ENCODE measurements at regions of chr16 and their contacts with region 1.

Region 1: GRCh38 chr16:71499775-71500364 is 10.7 kb upstream of the ZNF19 start:
- DNase-seq: peak; percentile 61
- ATAC-seq: peak; percentile 65
- H3K4me3 Mint-ChIP-seq: no peak overlapping the region
- H3K27ac Mint-ChIP-seq: no peak overlapping the region
- H3K4me1 Mint-ChIP-seq: no peaks in the 10 kb centered on the region
- H3K27me3 Mint-ChIP-seq: no peaks in the 10 kb centered on the region

Region 2: GRCh38 chr16:71230122-71230845 is 269.6 kb before region 1 on chr16 and contains the start of gene HYDIN:
- CTCF ChIA-PET with region 1: no interaction called
- DNase-seq: no peak
- ATAC-seq: no peak
- H3K4me3 Mint-ChIP-seq: no peak within 1 kb of the TSS
- H3K27ac Mint-ChIP-seq: no peak within 1 kb of the TSS
- H3K4me1 Mint-ChIP-seq: no peaks in the 10 kb centered on the region
- H3K27me3 Mint-ChIP-seq: peaks cover 22% of the 10 kb centered on the region
- total RNA-seq, gene HYDIN: not detected

Region 3: DNA sequence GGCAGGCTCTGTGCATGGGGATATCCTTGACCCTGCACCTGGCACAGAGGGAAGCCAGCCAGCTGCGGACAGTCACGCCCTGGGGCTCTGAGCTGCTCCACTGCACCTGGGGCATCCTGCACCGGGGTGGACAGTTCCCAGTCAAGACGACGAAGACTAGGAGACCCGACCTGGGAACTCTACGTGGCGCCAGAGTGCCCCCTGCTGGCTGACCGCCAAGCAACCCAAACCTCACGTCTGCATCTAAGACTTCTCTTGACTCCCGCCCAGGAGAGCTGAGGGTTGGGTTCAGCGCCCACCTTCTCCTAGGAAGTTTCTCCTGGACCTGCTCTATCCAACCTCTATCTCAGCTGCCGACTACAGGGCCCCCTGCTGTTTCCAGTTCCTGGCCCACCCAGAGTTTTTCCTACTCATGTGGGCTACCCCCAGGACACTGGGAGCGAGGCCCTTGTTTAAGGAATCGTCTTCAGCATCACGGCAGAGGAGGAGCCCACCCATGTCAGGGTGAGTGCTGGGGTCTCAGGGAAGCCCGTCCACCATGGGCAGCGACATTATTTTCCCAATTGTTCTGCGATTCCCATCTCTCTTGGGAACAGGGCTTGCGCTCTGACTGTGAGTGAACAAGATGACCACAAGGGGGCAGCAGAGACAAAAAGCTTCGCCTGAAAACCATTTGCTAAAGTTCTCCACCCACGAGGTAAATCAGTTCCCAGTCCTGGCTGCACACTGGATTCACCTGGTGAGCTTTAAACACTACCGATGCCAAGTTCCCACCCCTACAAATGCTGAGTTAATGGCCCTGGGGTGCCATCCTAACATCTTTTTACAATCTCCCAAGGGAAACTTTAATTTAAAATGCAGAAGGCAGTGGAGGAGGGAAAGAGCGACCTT is 87.4 kb before region 1 on chr16:
- CTCF ChIA-PET with region 1: interaction called, 80 read pairs
- DNase-seq: peak; percentile 66
- ATAC-seq: peak; percentile 77
- H3K4me3 Mint-ChIP-seq: no peak overlapping the region
- H3K27ac Mint-ChIP-seq: no peak overlapping the region
- H3K4me1 Mint-ChIP-seq: peaks cover 11% of the 10 kb centered on the region
- H3K27me3 Mint-ChIP-seq: peaks cover 45% of the 10 kb centered on the region

Region 4: DNA sequence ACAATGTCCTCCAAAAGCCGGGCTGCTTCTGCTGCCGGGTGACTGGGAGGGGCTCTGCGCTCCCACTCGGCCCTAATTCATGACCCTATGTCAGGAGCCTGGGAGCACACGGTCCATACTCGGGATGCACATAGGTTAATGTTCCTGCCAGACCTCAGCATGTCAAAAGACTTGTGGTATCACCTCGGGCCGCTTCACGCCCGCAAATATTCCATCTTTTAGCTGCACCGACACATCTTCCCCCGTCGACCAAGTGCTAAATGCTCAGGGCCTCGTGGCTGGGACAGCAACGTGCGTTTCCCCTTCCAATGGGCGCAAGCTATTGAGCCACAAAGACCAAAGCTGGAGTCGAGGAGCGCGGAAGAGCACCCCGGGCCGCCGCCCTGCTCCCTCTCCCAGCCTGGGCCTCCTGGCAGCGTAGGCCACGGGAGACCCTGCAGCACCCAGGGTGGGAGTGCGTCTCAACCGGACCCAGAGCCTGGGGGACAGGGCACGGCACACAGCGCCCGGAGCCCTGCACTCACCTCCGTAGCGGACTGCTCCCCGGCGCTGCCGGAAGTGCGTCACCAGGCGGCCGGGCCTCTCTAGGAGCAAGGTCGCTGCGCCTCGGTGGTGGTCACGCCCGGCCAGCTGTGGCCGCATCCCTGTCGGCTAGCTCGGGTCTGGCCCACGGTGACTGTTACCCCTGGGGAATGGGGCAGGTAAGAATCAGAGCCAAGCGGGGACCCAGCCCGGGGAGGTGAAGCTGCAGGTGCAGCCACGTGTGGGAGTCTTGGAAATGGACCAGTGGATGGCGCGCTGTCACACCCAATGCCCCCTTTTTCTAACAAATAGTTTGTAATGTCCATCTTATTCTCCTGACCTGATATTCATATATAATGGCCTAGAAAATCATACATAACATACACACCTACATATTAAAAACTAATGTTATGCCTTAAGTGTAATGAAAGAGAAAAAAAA is 37.9 kb before region 1 on chr16 and contains the start of gene ZNF23:
- CTCF ChIA-PET with region 1: interaction called, 14 read pairs
- DNase-seq: peak; percentile 82
- ATAC-seq: peak; percentile 99
- H3K4me3 Mint-ChIP-seq: peak within 1 kb of the TSS; percentile 89
- H3K27ac Mint-ChIP-seq: peak within 1 kb of the TSS; percentile 86
- H3K4me1 Mint-ChIP-seq: peaks cover 25% of the 10 kb centered on the region
- H3K27me3 Mint-ChIP-seq: no peaks in the 10 kb centered on the region
- total RNA-seq, gene ZNF23: 7.1 to 7.6 TPM

Region 5: DNA sequence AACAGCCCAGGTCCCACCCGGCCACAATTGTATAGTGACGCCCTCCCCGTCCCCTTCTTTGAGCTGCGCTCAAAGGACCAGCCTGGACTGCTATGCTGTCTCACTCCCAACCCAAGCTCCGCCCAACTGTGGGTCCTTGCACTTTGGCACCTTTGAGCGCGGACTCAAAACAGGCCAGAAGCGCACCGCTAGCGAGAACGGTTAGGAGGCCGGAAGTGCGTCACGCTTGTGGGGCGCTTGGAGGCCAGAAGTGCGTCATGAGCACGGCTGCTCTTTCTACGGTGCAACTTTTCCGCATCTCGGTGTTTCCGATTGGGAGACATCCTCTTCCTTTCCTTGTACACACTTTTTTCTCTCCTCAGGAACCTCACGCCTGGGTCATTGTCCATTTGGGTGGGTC is 10.7 kb before region 1 on chr16 and contains the start of gene ZNF19:
- CTCF ChIA-PET with region 1: interaction called, 14 read pairs
- DNase-seq: no peak
- ATAC-seq: no peak
- H3K4me3 Mint-ChIP-seq: no peak within 1 kb of the TSS
- H3K27ac Mint-ChIP-seq: no peak within 1 kb of the TSS
- H3K4me1 Mint-ChIP-seq: peaks cover 8% of the 10 kb centered on the region
- H3K27me3 Mint-ChIP-seq: peaks cover 6% of the 10 kb centered on the region
- total RNA-seq, gene ZNF19: 1.8 to 2.9 TPM

Region 6: GRCh38 chr16:71537643-71538042 is 37.8 kb after region 1 on chr16:
- CTCF ChIA-PET with region 1: interaction called, 11 read pairs
- DNase-seq: peak; percentile 50
- ATAC-seq: peak; percentile 69
- H3K4me3 Mint-ChIP-seq: no peak overlapping the region
- H3K27ac Mint-ChIP-seq: no peak overlapping the region
- H3K4me1 Mint-ChIP-seq: peaks cover 2% of the 10 kb centered on the region
- H3K27me3 Mint-ChIP-seq: peaks cover 4% of the 10 kb centered on the region